Spleen (tissue), 13 donors: ENCODE measurements at regions of chr6 and their contacts with region 1.

Region 1: DNA sequence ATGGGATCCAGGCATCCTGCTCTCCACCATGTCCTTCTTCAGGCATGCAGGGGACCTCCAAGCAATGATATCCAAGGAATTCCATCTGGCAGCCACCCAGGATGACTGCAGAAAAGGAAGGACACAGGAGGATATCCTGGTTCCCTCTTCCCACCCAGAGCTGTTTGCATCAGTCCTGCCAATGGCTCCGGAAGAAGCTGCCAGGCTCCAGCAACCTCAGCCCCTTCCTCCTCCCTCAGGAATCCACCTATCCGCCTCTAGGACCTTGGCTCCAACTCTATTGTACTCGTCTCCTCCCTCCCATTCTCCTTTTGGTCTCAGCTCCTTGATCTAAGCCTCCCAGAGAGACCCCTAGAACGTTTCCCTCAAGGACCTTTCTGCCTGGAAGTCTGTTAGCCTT is 733 bp upstream of the PSORS1C2 start:
- DNase-seq: no peak
- H3K4me3 ChIP-seq: no peak overlapping the region
- H3K27ac ChIP-seq: no peak overlapping the region
- H3K4me1 ChIP-seq: peaks cover 0 to 30% (median 8%) of the 10 kb centered on the region in 6 donors
- H3K27me3 ChIP-seq: no peaks in the 10 kb centered on the region
- CTCF ChIP-seq: no peak
- POLR2A ChIP-seq: no peak

Region 2: DNA sequence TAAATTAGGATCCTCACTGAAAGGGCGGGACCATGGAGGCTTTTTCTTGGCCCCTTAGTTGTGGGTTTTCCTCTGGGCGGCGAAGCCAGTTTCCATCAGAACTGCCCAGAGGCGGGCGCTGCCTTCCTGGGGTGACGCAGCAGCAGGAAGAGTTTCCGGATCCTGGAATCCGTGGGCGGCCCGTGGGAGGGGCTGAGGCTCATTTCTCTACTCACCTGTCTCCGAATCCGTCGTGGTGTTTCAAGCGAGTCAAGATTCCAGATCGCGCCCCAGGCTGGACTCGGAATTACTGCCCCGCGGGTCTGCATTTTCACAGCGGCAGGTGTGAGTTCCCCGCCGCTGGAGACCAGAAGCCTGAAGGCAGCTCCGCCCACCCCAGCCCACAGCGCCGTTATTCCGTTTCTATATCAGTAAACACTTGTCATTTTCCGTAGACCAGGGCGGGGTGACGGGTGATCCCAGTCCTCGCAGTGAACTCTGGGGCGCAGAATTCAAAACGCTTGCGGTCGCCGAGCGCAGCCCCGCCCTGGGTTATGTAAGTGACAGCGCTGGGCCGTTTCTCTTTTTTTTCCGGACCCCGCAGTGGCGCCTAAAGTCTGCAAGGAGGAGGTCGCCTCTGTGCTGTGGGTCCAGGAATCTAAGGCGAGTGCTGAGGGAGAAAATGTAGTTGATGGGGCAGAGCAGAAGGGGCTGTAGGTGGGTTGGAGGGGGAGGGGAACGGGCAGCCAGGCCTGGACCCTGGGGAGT is 58.1 kb after region 1 on chr6:
- intact Hi-C with region 1: loop called (anchors 2 kb)
- DNase-seq: peak; percentile 98
- H3K4me3 ChIP-seq: peak overlapping the region; percentile 39 to 81 (median 56)
- H3K27ac ChIP-seq: peak overlapping the region; percentile 93 to 100 (median 99)
- H3K4me1 ChIP-seq: peaks cover 6 to 77% (median 52%) of the 10 kb centered on the region in 6 donors
- H3K27me3 ChIP-seq: no peaks in the 10 kb centered on the region
- CTCF ChIP-seq: peak in 2 of 11 experiments; percentile 18 to 19
- POLR2A ChIP-seq: peak; percentile 41 to 65 (median 50)

Region 3: DNA sequence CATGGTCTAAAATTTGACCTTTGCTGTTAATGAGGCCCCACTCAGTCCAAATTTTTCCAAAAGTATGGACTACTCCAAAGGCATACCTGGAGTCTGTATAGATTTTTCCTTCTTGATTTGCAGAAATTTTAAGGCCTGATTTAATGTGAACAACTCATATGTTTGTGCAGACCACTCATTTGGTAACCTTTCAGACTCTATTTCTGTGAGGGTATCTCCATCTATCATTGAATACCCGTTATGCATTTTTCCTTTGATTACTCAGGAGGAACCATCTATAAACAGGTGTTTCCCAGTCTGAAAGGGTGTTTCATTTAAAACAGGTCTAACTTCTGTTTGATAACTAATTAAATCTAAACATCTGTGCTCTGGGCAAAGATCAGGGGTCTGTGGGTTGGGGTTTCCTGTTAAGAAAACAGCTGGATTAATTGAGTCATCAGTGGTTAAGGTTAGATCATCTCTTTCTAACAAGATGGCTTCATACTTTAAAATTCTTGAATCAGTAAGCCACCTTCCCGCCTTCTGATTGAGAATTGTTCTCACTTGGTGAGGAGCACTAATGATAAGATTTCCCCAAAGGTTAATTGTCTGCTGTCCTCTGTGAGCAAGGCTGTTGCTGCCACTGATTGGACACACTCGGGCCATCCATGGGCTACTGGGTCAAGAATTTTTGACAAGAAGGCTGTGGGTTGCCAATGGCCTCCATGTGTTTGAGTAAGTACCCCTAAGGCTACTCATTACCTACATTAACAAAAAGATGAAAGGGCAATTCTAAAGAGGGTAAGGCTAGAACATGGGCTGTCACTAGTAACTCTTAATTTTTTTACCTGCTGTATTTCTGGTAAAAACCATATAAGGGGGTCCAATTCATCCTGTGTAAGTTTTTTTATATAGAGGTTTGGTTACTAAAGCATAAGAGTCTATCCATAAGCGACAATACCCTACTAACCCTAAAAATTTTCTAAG is 193.3 kb after region 1 on chr6:
- intact Hi-C with region 1: no loop called
- DNase-seq: no peak
- H3K4me3 ChIP-seq: no peak overlapping the region
- H3K27ac ChIP-seq: no peak overlapping the region
- H3K4me1 ChIP-seq: no peaks in the 10 kb centered on the region
- H3K27me3 ChIP-seq: no peaks in the 10 kb centered on the region
- CTCF ChIP-seq: no peak
- POLR2A ChIP-seq: no peak

Region 4: DNA sequence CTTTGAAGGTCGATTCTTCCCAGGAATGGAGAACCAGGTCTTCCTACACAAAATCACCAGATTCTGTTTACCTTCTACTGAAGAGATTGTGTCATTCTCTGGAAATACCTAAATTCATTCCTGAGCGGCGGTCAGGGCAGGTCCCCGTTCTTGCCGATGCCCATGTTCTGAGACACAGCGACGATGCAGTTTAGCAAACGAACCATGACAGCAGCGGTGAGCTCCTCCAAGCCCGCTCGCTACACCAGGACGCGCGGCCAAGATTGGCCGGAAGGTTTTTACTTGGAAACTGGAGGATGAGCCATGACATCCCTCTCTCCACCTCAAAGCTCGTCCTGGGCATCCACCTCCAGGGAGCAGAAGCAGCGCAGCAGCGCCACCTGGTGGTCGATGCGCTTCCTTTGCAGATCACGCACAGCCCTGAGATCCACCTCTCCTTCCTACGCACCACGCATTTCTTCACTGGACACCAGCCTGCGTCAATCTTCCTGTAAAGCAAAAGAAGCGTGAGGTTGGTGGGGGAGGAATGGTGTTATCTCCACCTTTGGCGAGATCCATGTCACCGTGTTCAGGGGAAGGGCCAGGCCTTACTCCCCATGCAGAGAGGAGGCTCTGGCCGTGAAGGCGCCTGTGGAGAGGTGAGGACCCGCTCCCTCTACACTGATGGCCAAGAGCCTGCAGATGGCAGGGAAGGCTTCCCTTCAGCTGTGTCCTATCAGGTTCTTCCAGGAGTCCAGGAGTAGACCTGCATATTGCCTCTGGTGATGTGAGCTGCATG is 227.3 kb after region 1 on chr6:
- intact Hi-C with region 1: loop called (anchors 5 kb)
- DNase-seq: peak; percentile 96
- H3K4me3 ChIP-seq: peak overlapping the region in 7 of 8 donors; percentile 21 to 66 (median 35)
- H3K27ac ChIP-seq: peak overlapping the region in 1 of 8 donors; percentile 18
- H3K4me1 ChIP-seq: peaks cover 0 to 13% (median 8%) of the 10 kb centered on the region in 6 donors
- H3K27me3 ChIP-seq: peaks cover 0 to 29% (median 0%) of the 10 kb centered on the region in 7 donors
- CTCF ChIP-seq: peak; percentile 89 to 98 (median 95)
- POLR2A ChIP-seq: no peak

Region 5: GRCh38 chr6:31383149-31383548 is 243.6 kb after region 1 on chr6:
- intact Hi-C with region 1: no loop called
- DNase-seq: no peak
- H3K4me3 ChIP-seq: no peak overlapping the region
- H3K27ac ChIP-seq: no peak overlapping the region
- H3K4me1 ChIP-seq: no peaks in the 10 kb centered on the region
- H3K27me3 ChIP-seq: peaks cover 0 to 15% (median 0%) of the 10 kb centered on the region in 7 donors
- CTCF ChIP-seq: no peak
- POLR2A ChIP-seq: no peak